ENCODE measurements at regions of chr16 and their contacts with region 1.

Region 1: DNA sequence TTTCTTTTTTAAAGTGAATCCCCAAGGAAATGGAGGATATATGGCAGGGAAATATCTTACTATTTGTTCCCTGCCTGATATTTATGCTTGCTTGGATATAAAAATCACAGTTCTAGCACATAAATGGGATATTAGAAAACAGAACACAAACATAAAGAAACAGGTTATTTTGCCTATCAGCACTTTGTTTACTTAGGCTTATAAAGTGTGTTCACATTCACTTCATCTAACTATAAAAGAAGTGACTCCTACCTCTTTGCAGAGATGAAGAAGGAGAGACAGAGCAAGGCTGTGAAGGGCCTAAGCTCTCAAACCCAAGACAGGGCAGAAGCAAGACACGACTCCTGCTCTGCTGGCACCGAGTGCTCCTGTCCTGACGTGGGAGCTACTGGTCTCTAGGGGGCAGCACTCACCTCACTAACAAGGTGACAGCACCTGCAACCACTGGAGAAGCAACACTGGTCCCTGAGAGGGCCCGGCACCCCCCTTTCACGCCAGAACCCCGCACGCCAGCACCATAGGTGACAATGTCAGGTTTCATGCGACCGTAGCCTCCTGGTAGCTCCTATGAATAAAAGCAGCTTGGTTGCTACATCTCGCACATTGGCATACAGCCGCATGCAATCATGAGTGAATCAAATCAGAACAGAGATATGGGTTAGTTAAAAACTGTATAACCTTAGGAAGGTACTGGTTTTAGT is 32.0 kb downstream of the MBTPS1 start:
- DNase-seq: peak; percentile 27 to 85 (median 64)
- ATAC-seq: peak; percentile 74 to 91 (median 84)
- H3K4me3 ChIP-seq: no peak overlapping the region
- H3K4me3 Mint-ChIP-seq: no peak overlapping the region
- H3K27ac ChIP-seq: no peak overlapping the region
- H3K27ac Mint-ChIP-seq: peak overlapping the region; percentile 23 to 52
- H3K4me1 ChIP-seq: peaks cover 13 to 27% of the 10 kb centered on the region in 2 experiments
- H3K4me1 Mint-ChIP-seq: peaks cover 39 to 53% (median 48%) of the 10 kb centered on the region in 3 donors
- H3K27me3 ChIP-seq: no peaks in the 10 kb centered on the region
- H3K27me3 Mint-ChIP-seq: no peaks in the 10 kb centered on the region

Region 2: DNA sequence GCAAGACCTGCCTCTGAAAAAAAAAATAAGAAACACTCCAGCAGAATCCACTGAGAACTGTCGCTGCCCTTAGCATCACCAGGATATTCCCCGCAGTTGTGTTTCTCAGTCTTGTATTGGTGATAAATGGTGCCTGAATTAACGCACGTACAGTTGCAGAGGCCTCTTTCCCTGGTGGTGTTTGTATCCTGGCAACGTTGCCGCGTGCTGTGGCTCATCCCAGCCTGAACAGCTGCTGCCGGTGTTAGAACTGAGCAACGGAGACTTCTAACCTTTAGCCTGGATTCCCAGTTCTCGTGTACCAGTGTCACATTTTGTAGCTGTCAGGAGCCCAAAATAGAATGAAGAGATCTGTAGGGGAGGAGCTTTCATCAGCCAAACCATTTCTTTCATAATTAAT is 181.0 kb before region 1 on chr16:
- CTCF ChIA-PET with region 1: no interaction called
- POLR2A ChIA-PET with region 1: no interaction called
- DNase-seq: no peak
- ATAC-seq: no peak
- H3K4me3 ChIP-seq: no peak overlapping the region
- H3K4me3 Mint-ChIP-seq: no peak overlapping the region
- H3K27ac ChIP-seq: no peak overlapping the region
- H3K27ac Mint-ChIP-seq: no peak overlapping the region
- H3K4me1 ChIP-seq: peaks cover 5 to 13% of the 10 kb centered on the region in 2 experiments
- H3K4me1 Mint-ChIP-seq: peaks cover 38 to 52% (median 48%) of the 10 kb centered on the region in 3 donors
- H3K27me3 ChIP-seq: no peaks in the 10 kb centered on the region
- H3K27me3 Mint-ChIP-seq: no peaks in the 10 kb centered on the region

Region 3: DNA sequence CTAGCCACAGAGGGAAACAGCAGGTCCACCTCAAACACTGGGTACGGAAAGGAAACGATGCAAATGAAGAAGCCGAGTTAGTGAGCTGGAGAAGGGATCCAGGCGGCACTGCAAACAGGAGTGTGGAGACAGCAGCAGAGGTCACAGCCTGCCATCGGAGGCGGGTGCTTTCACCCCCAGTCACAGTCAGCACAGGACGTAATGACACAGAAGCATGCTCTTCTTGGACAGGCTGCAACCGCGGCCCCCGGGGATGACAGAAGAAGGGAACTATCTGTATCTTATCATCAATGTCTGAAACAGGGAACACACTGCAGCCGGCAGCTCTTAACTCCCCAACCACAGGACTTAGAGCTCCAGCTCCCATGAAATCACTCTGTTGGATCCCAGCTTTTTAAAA is 26.1 kb before region 1 on chr16:
- CTCF ChIA-PET with region 1: no interaction called
- POLR2A ChIA-PET with region 1: no interaction called
- DNase-seq: no peak
- ATAC-seq: no peak
- H3K4me3 ChIP-seq: no peak overlapping the region
- H3K4me3 Mint-ChIP-seq: no peak overlapping the region
- H3K27ac ChIP-seq: no peak overlapping the region
- H3K27ac Mint-ChIP-seq: no peak overlapping the region
- H3K4me1 ChIP-seq: no peaks in the 10 kb centered on the region
- H3K4me1 Mint-ChIP-seq: no peaks in the 10 kb centered on the region
- H3K27me3 ChIP-seq: no peaks in the 10 kb centered on the region
- H3K27me3 Mint-ChIP-seq: no peaks in the 10 kb centered on the region

Region 4: DNA sequence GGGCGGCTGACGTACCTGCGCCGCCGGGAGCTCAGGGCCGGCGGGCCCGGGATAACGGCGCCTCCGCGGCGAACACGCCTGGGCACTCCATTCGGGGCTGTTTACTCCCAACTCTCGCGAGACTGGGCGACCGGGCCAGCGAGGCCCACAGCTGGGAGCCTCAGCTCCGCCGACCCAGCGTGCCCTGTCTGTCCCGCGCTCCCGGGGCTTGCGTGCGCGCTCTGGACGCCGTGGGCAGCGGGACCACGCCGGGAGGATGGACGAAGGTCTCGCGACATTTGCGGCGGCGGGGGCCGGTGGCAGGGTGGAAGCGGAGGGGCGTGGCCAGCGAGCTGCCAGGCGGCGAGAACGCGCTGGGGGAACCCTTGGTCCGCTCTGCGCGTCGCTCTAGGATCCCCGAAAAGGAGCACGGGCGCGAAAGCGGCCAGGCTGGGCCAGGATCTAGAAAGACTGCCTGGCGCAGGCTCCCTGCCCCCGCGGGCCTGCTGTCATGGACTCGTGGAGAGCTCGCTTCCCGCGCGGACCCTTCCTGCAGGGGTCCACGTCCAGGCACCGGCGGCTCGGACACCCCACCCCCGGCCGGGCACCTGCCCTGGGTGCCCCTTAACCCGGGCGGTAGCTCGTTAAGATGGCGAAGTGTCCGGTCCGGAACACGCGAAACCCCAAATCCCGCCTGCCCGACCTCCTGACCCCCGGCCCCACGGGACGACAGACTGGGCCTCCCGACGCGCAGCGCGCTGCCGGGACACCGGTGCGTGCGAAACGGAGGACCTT is 32.2 kb after region 1 on chr16 and contains the start of gene MBTPS1:
- CTCF ChIA-PET with region 1: interaction called, 6 to 11 read pairs
- POLR2A ChIA-PET with region 1: interaction called in 1 of 2 experiments, 5 read pairs
- DNase-seq: peak; percentile 93 to 99 (median 96)
- ATAC-seq: peak; percentile 86 to 91 (median 90)
- H3K4me3 ChIP-seq: peak within 1 kb of the TSS; percentile 79 to 89
- H3K4me3 Mint-ChIP-seq: peak within 1 kb of the TSS; percentile 89 to 95 (median 90)
- H3K27ac ChIP-seq: peak within 1 kb of the TSS; percentile 76
- H3K27ac Mint-ChIP-seq: peak within 1 kb of the TSS; percentile 92
- H3K4me1 ChIP-seq: peaks cover 12 to 30% of the 10 kb centered on the region in 2 experiments
- H3K4me1 Mint-ChIP-seq: peaks cover 29 to 36% (median 31%) of the 10 kb centered on the region in 3 donors
- H3K27me3 ChIP-seq: no peaks in the 10 kb centered on the region
- H3K27me3 Mint-ChIP-seq: no peaks in the 10 kb centered on the region
- total RNA-seq, gene MBTPS1: 122 to 142 (median 131) TPM

Region 5: GRCh38 chr16:84186685-84187437 is 102.1 kb after region 1 on chr16 and contains the start of gene TAF1C:
- CTCF ChIA-PET with region 1: interaction called, 7 to 67 read pairs
- POLR2A ChIA-PET with region 1: no interaction called
- DNase-seq: peak; percentile 74 to 96 (median 85)
- ATAC-seq: peak; percentile 95 to 98 (median 96)
- H3K4me3 ChIP-seq: peak within 1 kb of the TSS; percentile 88 to 97
- H3K4me3 Mint-ChIP-seq: peak within 1 kb of the TSS; percentile 92 to 96 (median 93)
- H3K27ac ChIP-seq: peak within 1 kb of the TSS; percentile 52
- H3K27ac Mint-ChIP-seq: peak within 1 kb of the TSS; percentile 89 to 93
- H3K4me1 ChIP-seq: peaks cover 3 to 27% of the 10 kb centered on the region in 2 experiments
- H3K4me1 Mint-ChIP-seq: peaks cover 25 to 30% (median 28%) of the 10 kb centered on the region in 3 donors
- H3K27me3 ChIP-seq: no peaks in the 10 kb centered on the region
- H3K27me3 Mint-ChIP-seq: no peaks in the 10 kb centered on the region
- total RNA-seq, gene TAF1C: 81.9 to 97.6 (median 92.8) TPM

Region 6: DNA sequence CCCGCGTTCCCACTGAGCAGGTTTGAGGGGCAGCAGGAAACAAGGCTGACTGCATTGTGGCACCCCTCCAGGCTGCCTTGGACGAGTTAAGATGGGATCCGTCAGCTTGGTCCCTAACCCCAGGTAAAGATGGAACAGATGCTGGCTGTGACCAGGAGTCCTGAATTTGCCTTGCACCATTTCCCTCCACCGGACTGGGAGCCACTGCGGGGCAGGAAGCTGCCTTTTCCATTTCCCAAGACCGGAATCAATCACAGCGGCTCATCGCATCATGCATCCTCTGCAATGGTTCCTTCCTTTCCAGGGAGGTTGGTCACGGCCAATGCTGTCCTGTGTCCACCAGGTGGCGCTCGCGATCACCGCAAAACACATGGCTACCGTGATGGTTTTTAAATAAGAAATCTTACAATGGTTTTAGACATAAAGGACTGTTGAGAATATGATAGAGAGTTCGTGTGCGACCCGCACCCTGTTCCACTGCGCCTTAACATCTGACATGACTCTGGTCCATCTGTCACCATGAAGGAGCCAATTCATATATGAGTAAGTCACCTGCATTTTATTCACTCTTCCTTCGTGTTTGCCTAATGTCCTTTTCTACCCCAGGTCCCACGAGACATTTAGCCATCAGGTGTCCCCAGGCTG is 426.6 kb after region 1 on chr16:
- CTCF ChIA-PET with region 1: no interaction called
- POLR2A ChIA-PET with region 1: interaction called in 1 of 2 experiments, 16 read pairs
- DNase-seq: peak; percentile 48 to 93 (median 81)
- ATAC-seq: peak; percentile 14 to 22 (median 19)
- H3K4me3 ChIP-seq: no peak overlapping the region
- H3K4me3 Mint-ChIP-seq: no peak overlapping the region
- H3K27ac ChIP-seq: no peak overlapping the region
- H3K27ac Mint-ChIP-seq: peak overlapping the region; percentile 78 to 89
- H3K4me1 ChIP-seq: peaks cover 49 to 86% of the 10 kb centered on the region in 2 experiments
- H3K4me1 Mint-ChIP-seq: peaks cover 65 to 72% (median 70%) of the 10 kb centered on the region in 3 donors
- H3K27me3 ChIP-seq: no peaks in the 10 kb centered on the region
- H3K27me3 Mint-ChIP-seq: no peaks in the 10 kb centered on the region

Measured in T-cell (primary cell).